Mammary epithelial cell (primary cell): ENCODE measurements at regions of chr3 and their contacts with region 1.

Region 1: GRCh38 chr3:157493627-157494550 is 9.3 kb downstream of the VEPH1 start:
- DNase-seq: peak; percentile 30
- H3K4me3 ChIP-seq: no peak overlapping the region
- H3K27ac ChIP-seq: no peak overlapping the region
- H3K4me1 ChIP-seq: peaks cover 3% of the 10 kb centered on the region
- H3K27me3 ChIP-seq: no peaks in the 10 kb centered on the region
- CTCF ChIP-seq: peak; percentile 65 to 66

Region 2: DNA sequence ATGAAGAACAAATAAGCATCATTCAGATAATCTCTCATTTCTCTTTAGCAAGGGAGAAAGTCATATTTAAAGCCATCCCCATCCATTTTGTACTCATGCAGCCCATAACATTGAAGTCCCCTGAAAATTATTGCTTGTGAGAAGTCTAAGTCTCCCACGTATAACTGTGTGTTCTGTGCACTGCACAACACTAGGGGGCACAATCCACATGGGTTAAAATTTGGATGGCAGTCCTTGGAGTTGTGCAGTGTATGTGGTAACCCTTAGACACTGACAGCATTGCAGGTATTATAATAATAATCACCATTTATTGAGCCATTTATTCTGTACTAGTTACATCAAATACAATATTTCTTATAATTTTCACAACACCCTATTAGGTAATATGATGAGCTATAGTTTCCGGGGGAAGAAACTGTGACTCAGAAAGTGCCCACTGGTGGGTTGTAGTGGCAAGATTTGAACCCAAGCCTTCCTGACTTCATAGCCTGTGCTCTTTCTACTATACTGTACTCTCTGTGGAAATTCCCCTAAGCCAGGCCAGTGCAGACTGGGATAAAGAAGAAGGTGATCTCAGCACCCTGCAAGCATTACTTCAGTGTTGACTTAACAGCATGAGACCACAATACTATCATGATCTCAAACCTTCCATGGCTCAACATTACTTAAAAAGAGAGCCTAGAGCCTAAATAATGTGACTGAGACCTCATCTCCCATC is 1357.8 kb before region 1 on chr3:
- CTCF ChIA-PET with region 1: no interaction called
- dilution Hi-C with region 1: no loop called
- in situ Hi-C with region 1: loop called in 1 of 2 experiments (anchors 25 kb)
- intact Hi-C with region 1: no loop called
- DNase-seq: peak; percentile 3
- H3K4me3 ChIP-seq: no peak overlapping the region
- H3K27ac ChIP-seq: no peak overlapping the region
- H3K4me1 ChIP-seq: no peaks in the 10 kb centered on the region
- H3K27me3 ChIP-seq: peaks cover 2% of the 10 kb centered on the region
- CTCF ChIP-seq: peak; percentile 20 to 27

Region 3: GRCh38 chr3:157327018-157327417 is 166.9 kb before region 1 on chr3:
- CTCF ChIA-PET with region 1: no interaction called
- dilution Hi-C with region 1: no loop called
- in situ Hi-C with region 1: no loop called
- intact Hi-C with region 1: loop called (anchors 1 kb)
- DNase-seq: no peak
- H3K4me3 ChIP-seq: no peak overlapping the region
- H3K27ac ChIP-seq: no peak overlapping the region
- H3K4me1 ChIP-seq: no peaks in the 10 kb centered on the region
- H3K27me3 ChIP-seq: no peaks in the 10 kb centered on the region
- CTCF ChIP-seq: peak in 1 of 2 donors; percentile 5

Region 4: GRCh38 chr3:157447026-157447694 is 46.7 kb before region 1 on chr3:
- CTCF ChIA-PET with region 1: no interaction called
- dilution Hi-C with region 1: no loop called
- in situ Hi-C with region 1: no loop called
- intact Hi-C with region 1: loop called (anchors 5 kb)
- DNase-seq: peak; percentile 17
- H3K4me3 ChIP-seq: no peak overlapping the region
- H3K27ac ChIP-seq: no peak overlapping the region
- H3K4me1 ChIP-seq: no peaks in the 10 kb centered on the region
- H3K27me3 ChIP-seq: peaks cover 2% of the 10 kb centered on the region
- CTCF ChIP-seq: peak; percentile 48 to 70